ENCODE measurements at regions of chr4 and their contacts with region 1.

Region 1: DNA sequence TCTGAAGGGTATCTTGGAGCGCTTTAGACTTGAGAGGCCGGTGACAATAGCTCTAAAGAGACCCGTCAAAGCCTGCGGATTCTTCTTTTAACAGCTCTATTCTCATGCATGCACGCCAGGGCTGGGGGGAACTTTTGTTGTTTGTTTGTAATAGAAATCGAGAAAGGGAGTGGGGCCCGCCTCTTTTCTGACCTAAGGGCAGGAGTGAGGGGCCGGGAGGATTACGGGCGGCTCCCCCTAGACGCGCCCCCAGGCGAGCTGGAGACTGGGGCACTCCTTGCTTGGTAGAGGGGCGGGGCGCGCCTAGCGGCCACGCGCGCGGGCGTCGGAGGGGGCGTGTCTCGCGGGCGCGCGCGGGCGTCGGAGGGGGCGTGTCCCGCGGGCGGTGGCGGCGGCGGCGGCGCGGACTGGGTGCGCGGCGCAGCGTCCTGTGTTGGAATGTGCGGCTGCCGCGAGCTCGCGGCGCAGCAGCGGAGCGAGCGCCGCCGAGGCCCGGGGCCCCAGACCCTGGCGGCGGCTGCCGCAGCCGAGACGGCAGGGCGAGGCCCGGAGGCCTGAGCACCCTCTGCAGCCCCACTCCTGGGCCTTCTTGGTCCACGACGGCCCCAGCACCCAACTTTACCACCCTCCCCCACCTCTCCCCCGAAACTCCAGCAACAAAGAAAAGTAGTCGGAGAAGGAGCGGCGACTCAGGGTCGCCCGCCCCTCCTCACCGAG is at the start of gene REST:
- DNase-seq: peak; percentile 80 to 91 (median 86)
- H3K4me3 ChIP-seq: peak within 1 kb of the TSS; percentile 58 to 79
- H3K4me3 Mint-ChIP-seq: peak within 1 kb of the TSS; percentile 89 to 97 (median 93)
- H3K27ac ChIP-seq: peak within 1 kb of the TSS; percentile 85
- H3K27ac Mint-ChIP-seq: peak within 1 kb of the TSS; percentile 87 to 97 (median 93)
- H3K4me1 ChIP-seq: peaks cover 42% of the 10 kb centered on the region
- H3K4me1 Mint-ChIP-seq: peaks cover 30 to 54% (median 43%) of the 10 kb centered on the region in 4 donors
- H3K27me3 ChIP-seq: no peaks in the 10 kb centered on the region
- H3K27me3 Mint-ChIP-seq: no peaks in the 10 kb centered on the region
- total RNA-seq, gene REST: 77.3 to 79.2 TPM

Region 2: DNA sequence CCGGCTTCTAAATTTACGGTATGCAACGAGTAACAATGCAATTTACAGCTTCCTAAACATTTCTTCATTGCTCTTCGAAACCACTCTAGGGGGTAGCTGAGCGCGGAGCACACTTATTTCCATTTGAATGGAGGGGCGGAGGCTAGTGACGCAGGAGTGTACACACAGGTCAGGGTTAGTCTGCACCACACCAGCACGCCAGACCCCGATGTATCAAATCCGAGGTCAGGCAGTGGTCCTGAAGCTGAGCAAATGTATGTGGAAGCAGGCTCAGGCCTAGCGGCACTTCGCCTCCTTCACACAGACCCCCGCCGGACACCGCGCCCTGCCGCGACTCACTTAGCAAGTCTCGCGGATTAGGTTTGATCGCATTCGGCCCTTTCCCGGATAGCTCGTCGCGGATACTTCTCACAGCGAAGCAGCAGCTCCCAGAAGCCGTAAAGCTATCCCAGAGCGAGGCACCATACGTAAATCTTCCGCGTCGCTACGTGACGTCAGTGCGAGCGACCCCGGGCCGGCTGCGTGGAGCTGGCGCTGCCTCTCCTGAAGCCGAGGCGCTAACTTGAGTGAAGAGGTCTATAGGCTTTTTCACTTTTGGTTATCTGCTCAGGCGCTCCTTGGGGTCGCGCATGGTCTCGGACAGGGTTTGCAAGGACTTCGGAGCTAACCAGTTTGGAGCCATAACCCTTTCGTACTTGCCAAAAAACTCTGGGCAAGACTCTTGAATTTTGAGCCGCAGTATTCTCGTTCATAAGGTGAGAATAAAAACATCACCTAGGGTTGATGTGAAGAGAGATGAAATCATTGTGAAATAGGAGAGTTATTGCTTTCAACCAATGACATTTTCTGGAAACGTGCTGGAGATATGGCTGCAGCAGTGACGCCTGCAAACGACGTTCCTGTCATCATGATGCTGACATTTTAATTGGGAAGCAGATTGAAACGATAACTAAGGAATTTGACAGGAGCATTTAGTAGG is 520.3 kb before region 1 on chr4 and contains the start of gene AASDH:
- CTCF ChIA-PET with region 1: no interaction called
- POLR2A ChIA-PET with region 1: interaction called, 22 read pairs
- intact Hi-C with region 1: loop called (anchors 1 kb)
- DNase-seq: peak; percentile 94 to 96 (median 95)
- H3K4me3 ChIP-seq: peak within 1 kb of the TSS; percentile 63 to 94
- H3K4me3 Mint-ChIP-seq: peak within 1 kb of the TSS; percentile 91 to 100 (median 96)
- H3K27ac ChIP-seq: peak within 1 kb of the TSS; percentile 81
- H3K27ac Mint-ChIP-seq: peak within 1 kb of the TSS; percentile 98 to 100 (median 99)
- H3K4me1 ChIP-seq: peaks cover 20% of the 10 kb centered on the region
- H3K4me1 Mint-ChIP-seq: peaks cover 21 to 48% (median 37%) of the 10 kb centered on the region in 4 donors
- H3K27me3 ChIP-seq: no peaks in the 10 kb centered on the region
- H3K27me3 Mint-ChIP-seq: no peaks in the 10 kb centered on the region
- total RNA-seq, gene AASDH: 19.2 to 23.7 TPM

Region 3: GRCh38 chr4:56530269-56531148 is 377.1 kb before region 1 on chr4:
- CTCF ChIA-PET with region 1: no interaction called
- POLR2A ChIA-PET with region 1: no interaction called
- intact Hi-C with region 1: loop called (anchors 2 kb)
- DNase-seq: peak; percentile 60 to 80 (median 63)
- H3K4me3 ChIP-seq: peak overlapping the region; percentile 48 to 57
- H3K4me3 Mint-ChIP-seq: no peak overlapping the region
- H3K27ac ChIP-seq: no peak overlapping the region
- H3K27ac Mint-ChIP-seq: peak overlapping the region in 6 of 7 donors; percentile 14 to 69 (median 40)
- H3K4me1 ChIP-seq: peaks cover 11% of the 10 kb centered on the region
- H3K4me1 Mint-ChIP-seq: no peaks in the 10 kb centered on the region
- H3K27me3 ChIP-seq: no peaks in the 10 kb centered on the region
- H3K27me3 Mint-ChIP-seq: peaks cover 7 to 9% of the 10 kb centered on the region in 2 donors

Region 4: DNA sequence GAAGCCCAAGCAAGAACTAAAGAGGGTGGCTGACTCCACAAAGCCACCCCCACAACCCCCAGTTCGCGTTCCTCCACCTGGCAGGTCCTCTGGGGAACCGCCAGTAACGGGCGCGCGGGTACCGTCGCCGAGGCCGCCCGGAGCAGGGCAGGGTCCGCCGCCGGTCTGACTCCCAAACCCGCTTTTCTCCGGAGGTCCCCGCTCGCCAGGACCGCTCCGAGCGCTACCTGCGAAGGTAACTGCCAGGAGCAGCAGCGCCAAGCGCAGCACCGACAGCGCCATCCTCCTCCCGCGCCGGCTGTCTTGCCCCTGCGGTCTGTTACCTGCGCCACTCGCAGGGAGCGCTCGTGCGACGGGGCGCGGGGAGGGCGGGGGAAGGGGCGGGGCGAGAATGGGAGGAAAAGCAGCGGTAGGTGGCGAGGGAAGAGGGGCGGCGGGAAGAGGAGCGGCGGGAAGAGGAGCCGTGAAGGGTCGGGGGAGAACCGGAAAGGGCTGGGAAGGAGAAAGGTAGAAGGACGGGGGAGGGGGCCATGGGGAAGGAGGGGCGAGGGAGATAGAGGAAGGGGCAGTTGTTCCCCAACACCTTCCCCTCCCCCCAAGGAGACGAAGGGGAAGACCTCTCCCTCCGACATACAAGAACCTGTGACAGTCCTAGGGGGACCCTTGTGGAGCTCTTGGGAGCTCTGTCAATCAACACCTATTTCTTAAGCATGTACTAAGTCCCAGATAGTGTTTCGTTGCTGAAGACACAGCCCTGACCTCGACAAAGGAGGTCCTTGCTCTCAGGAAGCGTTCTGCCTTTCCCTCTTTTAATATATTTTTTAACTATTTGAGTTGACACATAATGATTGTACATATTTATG is 86.0 kb before region 1 on chr4 and contains the start of gene SPINK2:
- CTCF ChIA-PET with region 1: interaction called, 3 read pairs
- POLR2A ChIA-PET with region 1: interaction called, 3 read pairs
- intact Hi-C with region 1: loop called (anchors 5 kb)
- DNase-seq: peak; percentile 62 to 75 (median 67)
- H3K4me3 ChIP-seq: peak within 1 kb of the TSS in 1 of 2 donors; percentile 53
- H3K4me3 Mint-ChIP-seq: peak within 1 kb of the TSS; percentile 76 to 83 (median 82)
- H3K27ac ChIP-seq: no peak within 1 kb of the TSS
- H3K27ac Mint-ChIP-seq: peak within 1 kb of the TSS in 6 of 7 donors; percentile 15 to 72 (median 52)
- H3K4me1 ChIP-seq: peaks cover 27% of the 10 kb centered on the region
- H3K4me1 Mint-ChIP-seq: peaks cover 14 to 35% (median 24%) of the 10 kb centered on the region in 4 donors
- H3K27me3 ChIP-seq: no peaks in the 10 kb centered on the region
- H3K27me3 Mint-ChIP-seq: peaks cover 0 to 2% of the 10 kb centered on the region in 2 donors
- total RNA-seq, gene SPINK2: 3.2 to 3.6 TPM

Region 5: GRCh38 chr4:56863441-56864139 is 44.1 kb before region 1 on chr4:
- CTCF ChIA-PET with region 1: no interaction called
- POLR2A ChIA-PET with region 1: no interaction called
- intact Hi-C with region 1: no loop called
- DNase-seq: no peak
- H3K4me3 ChIP-seq: no peak overlapping the region
- H3K4me3 Mint-ChIP-seq: no peak overlapping the region
- H3K27ac ChIP-seq: no peak overlapping the region
- H3K27ac Mint-ChIP-seq: peak overlapping the region in 1 of 7 donors; percentile 43
- H3K4me1 ChIP-seq: no peaks in the 10 kb centered on the region
- H3K4me1 Mint-ChIP-seq: no peaks in the 10 kb centered on the region
- H3K27me3 ChIP-seq: no peaks in the 10 kb centered on the region
- H3K27me3 Mint-ChIP-seq: peaks cover 0 to 2% of the 10 kb centered on the region in 2 donors

Region 6: GRCh38 chr4:56958111-56958517 is 50.5 kb after region 1 on chr4:
- CTCF ChIA-PET with region 1: no interaction called
- POLR2A ChIA-PET with region 1: interaction called, 3 read pairs
- intact Hi-C with region 1: loop called (anchors 1 kb)
- DNase-seq: no peak
- H3K4me3 ChIP-seq: no peak overlapping the region
- H3K4me3 Mint-ChIP-seq: no peak overlapping the region
- H3K27ac ChIP-seq: no peak overlapping the region
- H3K27ac Mint-ChIP-seq: peak overlapping the region in 1 of 7 donors; percentile 10
- H3K4me1 ChIP-seq: no peaks in the 10 kb centered on the region
- H3K4me1 Mint-ChIP-seq: no peaks in the 10 kb centered on the region
- H3K27me3 ChIP-seq: no peaks in the 10 kb centered on the region
- H3K27me3 Mint-ChIP-seq: no peaks in the 10 kb centered on the region